CD4-positive, alpha-beta T cell (primary cell): ENCODE measurements at regions of chr4 and their contacts with region 1.

Region 1: GRCh38 chr4:83284193-83285054 is at the start of gene COQ2:
- DNase-seq: peak; percentile 90 to 97 (median 94)
- ATAC-seq: peak; percentile 91
- H3K4me3 ChIP-seq: peak within 1 kb of the TSS; percentile 77
- H3K4me3 Mint-ChIP-seq: peak within 1 kb of the TSS; percentile 99
- H3K27ac ChIP-seq: peak within 1 kb of the TSS; percentile 72 to 83
- H3K27ac Mint-ChIP-seq: peak within 1 kb of the TSS; percentile 98
- H3K4me1 ChIP-seq: peaks cover 7% of the 10 kb centered on the region
- H3K4me1 Mint-ChIP-seq: peaks cover 41% of the 10 kb centered on the region
- H3K27me3 ChIP-seq: no peaks in the 10 kb centered on the region
- H3K27me3 Mint-ChIP-seq: no peaks in the 10 kb centered on the region
- CTCF ChIP-seq: no peak
- total RNA-seq, gene COQ2: 9.2 to 10.1 TPM

Region 2: DNA sequence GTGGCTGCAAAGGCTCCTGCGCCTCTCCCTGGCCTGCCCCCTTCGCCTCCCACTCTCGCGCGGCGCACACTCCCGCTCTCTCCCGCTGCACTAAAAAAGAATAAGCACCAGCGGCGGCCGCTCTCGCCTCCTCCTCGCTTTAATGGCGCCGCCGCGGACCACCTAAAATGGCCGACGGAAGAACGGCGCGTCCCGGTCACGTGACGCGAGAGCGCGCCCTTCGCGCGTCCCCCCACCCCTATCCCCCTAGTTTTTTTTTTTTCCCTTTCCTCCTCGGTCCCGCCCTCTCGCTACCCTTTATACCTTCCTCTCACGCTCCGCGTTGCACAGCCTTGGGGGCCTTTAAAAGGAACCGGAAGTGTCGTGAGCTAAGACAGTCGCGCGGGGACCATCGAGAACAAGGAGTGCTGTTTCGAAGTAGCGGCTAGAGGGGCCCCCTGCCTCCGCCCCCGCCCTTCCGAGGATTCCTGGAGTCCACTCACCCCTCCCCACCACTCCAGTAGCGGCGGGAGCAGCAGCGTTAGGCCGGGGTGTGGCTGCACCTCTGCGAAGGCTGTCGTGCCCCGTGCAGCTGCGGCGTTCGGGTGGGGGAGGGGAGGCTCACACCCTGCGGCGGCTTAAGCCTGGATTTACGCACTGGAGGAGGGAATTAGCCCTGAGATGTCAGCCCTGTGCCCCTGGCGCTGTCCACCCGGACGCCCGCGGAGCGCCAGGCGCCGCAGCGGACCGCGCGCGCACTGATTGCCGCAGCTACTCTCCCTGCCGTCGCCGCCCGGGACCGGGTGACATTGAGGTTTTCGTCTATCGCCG is 910.4 kb before region 1 on chr4 and contains the start of gene HNRNPD:
- CTCF ChIA-PET with region 1: no interaction called
- POLR2A ChIA-PET with region 1: no interaction called
- intact Hi-C with region 1: loop called (anchors 5 to 10 kb)
- DNase-seq: peak; percentile 77 to 99 (median 88)
- ATAC-seq: peak; percentile 83
- H3K4me3 ChIP-seq: peak within 1 kb of the TSS; percentile 97
- H3K4me3 Mint-ChIP-seq: peak within 1 kb of the TSS; percentile 99
- H3K27ac ChIP-seq: peak within 1 kb of the TSS; percentile 99
- H3K27ac Mint-ChIP-seq: peak within 1 kb of the TSS; percentile 98
- H3K4me1 ChIP-seq: peaks cover 24% of the 10 kb centered on the region
- H3K4me1 Mint-ChIP-seq: peaks cover 71% of the 10 kb centered on the region
- H3K27me3 ChIP-seq: no peaks in the 10 kb centered on the region
- H3K27me3 Mint-ChIP-seq: no peaks in the 10 kb centered on the region
- CTCF ChIP-seq: peak; percentile 11
- total RNA-seq, gene HNRNPD: 235 to 244 TPM

Region 3: GRCh38 chr4:82851885-82852750 is 432.3 kb before region 1 on chr4:
- CTCF ChIA-PET with region 1: interaction called, 3 read pairs
- POLR2A ChIA-PET with region 1: interaction called, 6 read pairs
- intact Hi-C with region 1: loop called (anchors 5 kb)
- DNase-seq: peak in 3 of 14 experiments; percentile 58 to 62 (median 58)
- ATAC-seq: peak; percentile 49
- H3K4me3 ChIP-seq: no peak overlapping the region
- H3K4me3 Mint-ChIP-seq: no peak overlapping the region
- H3K27ac ChIP-seq: no peak overlapping the region
- H3K27ac Mint-ChIP-seq: peak overlapping the region; percentile 56
- H3K4me1 ChIP-seq: no peaks in the 10 kb centered on the region
- H3K4me1 Mint-ChIP-seq: peaks cover 6% of the 10 kb centered on the region
- H3K27me3 ChIP-seq: no peaks in the 10 kb centered on the region
- H3K27me3 Mint-ChIP-seq: no peaks in the 10 kb centered on the region
- CTCF ChIP-seq: peak; percentile 34

Region 4: GRCh38 chr4:83012687-83013419 is 271.6 kb before region 1 on chr4:
- CTCF ChIA-PET with region 1: interaction called, 3 read pairs
- POLR2A ChIA-PET with region 1: interaction called, 11 read pairs
- intact Hi-C with region 1: loop called (anchors 2 kb)
- DNase-seq: peak; percentile 94 to 99 (median 96)
- ATAC-seq: peak; percentile 85
- H3K4me3 ChIP-seq: peak overlapping the region; percentile 71
- H3K4me3 Mint-ChIP-seq: peak overlapping the region; percentile 97
- H3K27ac ChIP-seq: peak overlapping the region; percentile 33 to 49
- H3K27ac Mint-ChIP-seq: peak overlapping the region; percentile 91
- H3K4me1 ChIP-seq: peaks cover 26% of the 10 kb centered on the region
- H3K4me1 Mint-ChIP-seq: peaks cover 58% of the 10 kb centered on the region
- H3K27me3 ChIP-seq: no peaks in the 10 kb centered on the region
- H3K27me3 Mint-ChIP-seq: no peaks in the 10 kb centered on the region
- CTCF ChIP-seq: peak; percentile 56

Region 5: DNA sequence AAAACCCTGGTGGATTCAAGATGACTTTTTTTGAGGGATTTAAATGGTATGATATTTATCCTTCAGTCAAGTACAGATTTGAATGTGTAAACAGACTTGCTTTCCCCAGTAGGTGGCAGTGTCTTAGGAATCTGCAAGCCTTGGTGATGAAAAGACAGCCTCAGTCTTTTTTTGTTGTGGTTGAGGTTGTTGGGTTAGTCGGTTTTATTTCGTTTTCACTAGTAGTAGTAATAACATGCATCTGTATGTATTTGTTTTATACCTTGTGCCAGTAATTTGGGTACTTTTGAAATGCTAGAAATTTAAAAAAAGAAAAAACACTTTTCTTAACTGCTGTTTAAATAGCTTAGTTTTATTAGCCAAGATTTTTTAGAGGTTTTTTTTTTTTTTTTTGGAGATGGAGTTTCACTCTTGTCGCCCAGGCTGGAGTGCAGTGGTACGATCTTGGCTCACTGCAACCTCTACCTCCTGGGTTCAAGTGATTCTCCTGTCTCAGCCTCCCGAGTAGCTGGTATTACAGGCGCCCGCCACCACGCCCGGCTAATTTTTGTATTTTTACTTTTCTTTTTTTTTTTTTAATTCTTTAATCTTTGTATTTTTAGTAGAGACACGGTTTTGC is 210.2 kb before region 1 on chr4:
- CTCF ChIA-PET with region 1: interaction called, 24 read pairs
- POLR2A ChIA-PET with region 1: interaction called, 12 read pairs
- intact Hi-C with region 1: loop called in 1 of 2 experiments (anchors 1 kb)
- DNase-seq: peak in 9 of 14 experiments; percentile 26 to 93 (median 59)
- ATAC-seq: peak; percentile 95
- H3K4me3 ChIP-seq: peak overlapping the region; percentile 13
- H3K4me3 Mint-ChIP-seq: peak overlapping the region; percentile 68
- H3K27ac ChIP-seq: no peak overlapping the region
- H3K27ac Mint-ChIP-seq: peak overlapping the region; percentile 69
- H3K4me1 ChIP-seq: peaks cover 8% of the 10 kb centered on the region
- H3K4me1 Mint-ChIP-seq: peaks cover 13% of the 10 kb centered on the region
- H3K27me3 ChIP-seq: no peaks in the 10 kb centered on the region
- H3K27me3 Mint-ChIP-seq: no peaks in the 10 kb centered on the region
- CTCF ChIP-seq: peak; percentile 77

Region 6: DNA sequence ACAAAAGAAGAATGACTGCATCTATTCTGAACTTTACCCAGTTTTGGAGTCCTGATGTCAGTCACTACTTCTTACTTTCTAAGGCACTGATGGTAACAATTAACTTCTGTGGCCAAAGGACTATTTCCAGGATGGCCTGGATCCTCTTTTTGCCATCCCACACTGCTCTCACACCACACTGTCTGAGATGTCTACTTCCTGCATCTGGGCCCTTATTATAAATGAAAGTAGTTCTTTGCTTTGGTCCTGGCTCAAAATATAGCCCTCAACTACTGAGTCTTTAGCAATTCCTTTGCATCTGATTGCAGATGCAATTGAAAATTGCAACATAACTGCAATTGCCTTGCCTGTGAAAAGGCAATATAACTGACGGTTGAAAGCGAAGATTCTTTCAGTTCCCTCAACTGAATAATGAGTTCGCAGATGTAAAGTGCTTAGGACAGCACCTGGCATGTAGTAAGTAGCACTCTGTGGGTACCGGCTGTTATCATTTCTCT is 44.0 kb before region 1 on chr4:
- CTCF ChIA-PET with region 1: no interaction called
- POLR2A ChIA-PET with region 1: no interaction called
- intact Hi-C with region 1: no loop called
- DNase-seq: no peak
- ATAC-seq: no peak
- H3K4me3 ChIP-seq: no peak overlapping the region
- H3K4me3 Mint-ChIP-seq: no peak overlapping the region
- H3K27ac ChIP-seq: no peak overlapping the region
- H3K27ac Mint-ChIP-seq: no peak overlapping the region
- H3K4me1 ChIP-seq: peaks cover 22% of the 10 kb centered on the region
- H3K4me1 Mint-ChIP-seq: peaks cover 43% of the 10 kb centered on the region
- H3K27me3 ChIP-seq: no peaks in the 10 kb centered on the region
- H3K27me3 Mint-ChIP-seq: no peaks in the 10 kb centered on the region
- CTCF ChIP-seq: no peak

Region 7: GRCh38 chr4:83259586-83259985 is 24.8 kb before region 1 on chr4:
- CTCF ChIA-PET with region 1: interaction called, 15 read pairs
- POLR2A ChIA-PET with region 1: interaction called, 6 read pairs
- intact Hi-C with region 1: no loop called
- DNase-seq: no peak
- ATAC-seq: no peak
- H3K4me3 ChIP-seq: no peak overlapping the region
- H3K4me3 Mint-ChIP-seq: no peak overlapping the region
- H3K27ac ChIP-seq: no peak overlapping the region
- H3K27ac Mint-ChIP-seq: no peak overlapping the region
- H3K4me1 ChIP-seq: peaks cover 5% of the 10 kb centered on the region
- H3K4me1 Mint-ChIP-seq: peaks cover 6% of the 10 kb centered on the region
- H3K27me3 ChIP-seq: no peaks in the 10 kb centered on the region
- H3K27me3 Mint-ChIP-seq: no peaks in the 10 kb centered on the region
- CTCF ChIP-seq: no peak

Region 8: DNA sequence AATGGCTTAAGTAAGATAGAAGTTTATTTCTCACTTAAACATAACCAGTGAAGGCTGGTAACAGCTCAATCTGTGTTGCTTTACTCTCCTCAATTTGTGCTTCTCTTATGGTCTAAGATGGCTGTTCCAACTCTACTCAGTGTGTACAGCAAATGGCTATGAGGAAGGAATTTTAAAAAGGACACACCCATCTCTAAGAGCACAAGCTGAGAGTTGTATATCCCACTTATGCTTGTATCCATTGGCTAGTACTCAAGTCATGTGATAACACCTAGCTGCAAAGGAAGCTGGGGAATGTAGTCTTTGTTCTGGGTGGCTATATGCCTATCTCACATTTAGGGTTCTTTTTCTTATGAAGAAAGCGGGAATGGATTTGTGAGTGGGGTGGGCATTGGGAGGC is 314.8 kb after region 1 on chr4:
- CTCF ChIA-PET with region 1: no interaction called
- POLR2A ChIA-PET with region 1: no interaction called
- intact Hi-C with region 1: no loop called
- DNase-seq: peak in 3 of 14 experiments; percentile 6 to 17 (median 10)
- ATAC-seq: peak; percentile 43
- H3K4me3 ChIP-seq: no peak overlapping the region
- H3K4me3 Mint-ChIP-seq: no peak overlapping the region
- H3K27ac ChIP-seq: no peak overlapping the region
- H3K27ac Mint-ChIP-seq: no peak overlapping the region
- H3K4me1 ChIP-seq: no peaks in the 10 kb centered on the region
- H3K4me1 Mint-ChIP-seq: no peaks in the 10 kb centered on the region
- H3K27me3 ChIP-seq: no peaks in the 10 kb centered on the region
- H3K27me3 Mint-ChIP-seq: no peaks in the 10 kb centered on the region
- CTCF ChIP-seq: no peak

Region 9: GRCh38 chr4:83609365-83609764 is 324.9 kb after region 1 on chr4:
- CTCF ChIA-PET with region 1: no interaction called
- POLR2A ChIA-PET with region 1: no interaction called
- intact Hi-C with region 1: no loop called
- DNase-seq: no peak
- ATAC-seq: no peak
- H3K4me3 ChIP-seq: no peak overlapping the region
- H3K4me3 Mint-ChIP-seq: no peak overlapping the region
- H3K27ac ChIP-seq: no peak overlapping the region
- H3K27ac Mint-ChIP-seq: no peak overlapping the region
- H3K4me1 ChIP-seq: no peaks in the 10 kb centered on the region
- H3K4me1 Mint-ChIP-seq: no peaks in the 10 kb centered on the region
- H3K27me3 ChIP-seq: no peaks in the 10 kb centered on the region
- H3K27me3 Mint-ChIP-seq: peaks cover 23% of the 10 kb centered on the region
- CTCF ChIP-seq: no peak